ENCODE measurements at regions of chr5 and their contacts with region 1.

Region 1: DNA sequence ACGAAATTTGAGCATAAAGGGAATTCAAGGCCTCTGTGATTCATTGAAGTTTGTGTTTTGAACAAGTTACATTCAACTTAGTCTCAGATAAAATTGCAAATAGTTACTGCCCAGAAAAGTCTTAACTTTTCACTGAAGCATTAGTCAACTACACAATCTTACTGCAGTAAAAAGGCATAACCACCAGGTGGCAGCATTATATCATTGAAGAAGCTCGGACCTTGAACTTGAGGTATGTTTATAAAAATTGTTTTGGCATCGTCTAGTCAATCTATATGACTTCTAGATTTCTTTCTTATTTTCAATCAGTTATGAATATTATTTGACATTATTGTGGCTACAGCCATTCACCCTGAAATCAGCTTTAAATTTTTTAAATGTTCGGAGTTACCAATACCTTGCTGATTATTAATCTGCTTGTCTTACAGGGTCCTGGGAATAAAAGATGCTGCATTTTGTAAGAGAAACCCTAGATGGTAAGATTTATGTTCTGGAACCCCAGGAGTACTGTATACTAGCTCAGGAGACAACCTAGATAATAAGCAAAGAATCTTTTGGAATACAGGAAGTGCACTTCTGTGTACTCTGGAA is 83.9 kb upstream of the GRAMD2B start:
- DNase-seq: peak; percentile 38 to 73 (median 56)
- ATAC-seq: peak; percentile 77
- H3K4me3 ChIP-seq: no peak overlapping the region
- H3K27ac ChIP-seq: no peak overlapping the region
- H3K4me1 ChIP-seq: no peaks in the 10 kb centered on the region
- H3K27me3 ChIP-seq: peaks cover 0 to 4% of the 10 kb centered on the region in 2 experiments; a peak in 1 of 5 replicates
- CTCF ChIP-seq: peak; percentile 59 to 84 (median 67); a peak in 5 of 6 replicates
- EP300 ChIP-seq: no peak
- POLR2A ChIP-seq: no peak
- RAD21 ChIP-seq: peak; percentile 91 to 95

Region 2: DNA sequence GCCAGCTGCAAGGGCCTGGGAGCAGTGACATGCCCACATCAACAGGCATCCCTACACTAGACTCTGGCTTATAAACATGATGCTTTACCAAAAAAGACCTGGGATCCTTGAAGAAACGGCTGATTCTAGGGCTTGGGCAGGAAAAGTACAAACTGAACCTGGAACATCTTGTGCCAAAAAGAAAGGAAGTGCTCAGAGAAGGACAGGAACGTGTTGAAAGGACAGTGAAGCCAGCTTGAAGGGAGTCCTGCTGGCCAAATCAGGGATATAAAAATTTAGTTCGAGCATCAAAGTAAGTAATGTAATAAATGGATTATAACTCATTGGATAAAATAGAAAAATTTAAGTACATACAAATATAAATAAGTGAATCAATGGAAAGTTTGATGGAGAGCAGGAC is 197.6 kb after region 1 on chr5:
- CTCF ChIA-PET with region 1: interaction called, 41 read pairs
- POLR2A ChIA-PET with region 1: no interaction called
- in situ Hi-C with region 1: no loop called
- intact Hi-C with region 1: loop called (anchors 1 kb)
- DNase-seq: no peak
- ATAC-seq: no peak
- H3K4me3 ChIP-seq: no peak overlapping the region
- H3K27ac ChIP-seq: no peak overlapping the region
- H3K4me1 ChIP-seq: peaks cover 6 to 9% of the 10 kb centered on the region in 2 experiments; a peak in 2 of 5 replicates
- H3K27me3 ChIP-seq: peaks cover 0 to 2% of the 10 kb centered on the region in 2 experiments; a peak in 2 of 5 replicates
- CTCF ChIP-seq: no peak
- EP300 ChIP-seq: no peak
- POLR2A ChIP-seq: no peak
- RAD21 ChIP-seq: no peak

Region 3: GRCh38 chr5:126600631-126601511 is 261.6 kb after region 1 on chr5 and contains the start of gene PHAX:
- CTCF ChIA-PET with region 1: interaction called, 21 read pairs
- POLR2A ChIA-PET with region 1: no interaction called
- in situ Hi-C with region 1: no loop called
- intact Hi-C with region 1: no loop called
- DNase-seq: peak; percentile 84 to 89 (median 86)
- ATAC-seq: peak; percentile 99
- H3K4me3 ChIP-seq: peak within 1 kb of the TSS; percentile 100
- H3K27ac ChIP-seq: peak within 1 kb of the TSS; percentile 87
- H3K4me1 ChIP-seq: peaks cover 5 to 27% of the 10 kb centered on the region in 2 experiments; a peak in 3 of 5 replicates
- H3K27me3 ChIP-seq: peaks cover 0 to 6% of the 10 kb centered on the region in 2 experiments; a peak in 1 of 5 replicates
- CTCF ChIP-seq: peak; percentile 87 to 92 (median 90)
- EP300 ChIP-seq: 0 out of 2 replicates have a peak, but pooled peaks have one; percentile 23
- POLR2A ChIP-seq: peak; percentile 90
- RAD21 ChIP-seq: peak; percentile 37 to 46; a peak in 3 of 4 replicates
- polyA plus RNA-seq, gene PHAX: 56.1 to 59.8 TPM

Region 4: DNA sequence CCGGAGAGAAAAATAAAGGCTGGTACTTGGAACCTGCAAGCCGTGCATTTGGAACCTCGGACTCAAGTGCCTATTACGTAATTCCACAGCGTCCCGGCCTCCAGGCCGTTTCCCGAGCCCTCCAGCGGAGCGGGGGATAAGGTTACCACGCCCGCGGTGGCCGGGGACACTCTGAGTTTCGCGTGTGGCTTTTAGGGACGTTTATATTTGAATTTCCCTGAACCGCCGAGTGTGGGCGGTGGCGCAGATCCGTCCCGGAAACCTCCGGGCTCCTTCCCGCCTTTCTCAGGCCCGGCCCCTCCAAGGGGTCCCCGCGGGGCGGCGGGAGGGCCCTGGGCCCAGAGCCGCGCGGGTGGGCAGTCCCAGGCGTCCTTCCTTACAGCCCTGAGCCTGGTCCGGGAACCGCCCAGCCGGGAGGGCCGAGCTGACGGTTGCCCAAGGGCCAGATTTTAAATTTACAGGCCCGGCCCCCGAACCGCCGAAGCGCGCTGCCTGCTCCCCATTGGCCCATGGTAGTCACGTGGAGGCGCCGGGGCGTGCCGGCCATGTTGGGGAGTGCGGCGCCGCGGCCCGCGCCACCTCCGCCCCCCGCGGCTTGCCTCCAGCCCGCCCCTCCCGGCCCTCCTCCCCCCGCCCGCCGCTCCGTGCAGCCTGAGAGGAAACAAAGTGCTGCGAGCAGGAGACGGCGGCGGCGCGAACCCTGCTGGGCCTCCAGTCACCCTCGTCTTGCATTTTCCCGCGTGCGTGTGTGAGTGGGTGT is 437.4 kb after region 1 on chr5 and contains the start of gene LMNB1:
- CTCF ChIA-PET with region 1: interaction called, 3 read pairs
- POLR2A ChIA-PET with region 1: no interaction called
- in situ Hi-C with region 1: loop called (anchors 25 kb)
- intact Hi-C with region 1: loop called (anchors 5 kb)
- DNase-seq: peak; percentile 94 to 97 (median 94)
- ATAC-seq: peak; percentile 83
- H3K4me3 ChIP-seq: peak within 1 kb of the TSS; percentile 93
- H3K27ac ChIP-seq: peak within 1 kb of the TSS; percentile 98
- H3K4me1 ChIP-seq: peaks cover 3 to 19% of the 10 kb centered on the region in 2 experiments; a peak in 4 of 5 replicates
- H3K27me3 ChIP-seq: no peaks in the 10 kb centered on the region
- CTCF ChIP-seq: no peak
- EP300 ChIP-seq: peak; percentile 57
- POLR2A ChIP-seq: peak; percentile 73
- RAD21 ChIP-seq: peak in 1 of 2 experiments; percentile 18; a peak in 3 of 4 replicates
- polyA plus RNA-seq, gene LMNB1: 2.8 to 7.6 TPM

Region 5: DNA sequence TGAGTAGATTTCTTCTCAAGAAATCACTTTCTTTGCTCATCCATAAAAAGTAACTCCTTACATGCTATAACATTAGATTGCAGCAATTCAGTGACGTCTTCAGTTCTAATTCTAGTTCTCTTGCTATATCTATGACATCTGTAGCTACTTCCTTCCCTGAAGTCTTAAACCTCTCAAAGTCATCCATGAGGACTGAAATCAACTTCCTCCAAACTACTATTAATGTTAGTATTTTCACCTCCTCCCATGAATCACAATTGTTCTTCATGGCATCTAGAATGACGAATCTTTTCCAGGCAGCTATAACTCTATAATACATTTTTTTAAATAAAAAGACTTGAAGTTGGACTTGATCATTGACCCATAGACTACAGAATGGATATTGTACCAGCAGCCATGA is 1131.9 kb after region 1 on chr5:
- CTCF ChIA-PET with region 1: no interaction called
- POLR2A ChIA-PET with region 1: no interaction called
- in situ Hi-C with region 1: loop called (anchors 25 kb)
- intact Hi-C with region 1: no loop called
- DNase-seq: no peak
- ATAC-seq: no peak
- H3K4me3 ChIP-seq: no peak overlapping the region
- H3K27ac ChIP-seq: no peak overlapping the region
- H3K4me1 ChIP-seq: no peaks in the 10 kb centered on the region
- H3K27me3 ChIP-seq: no peaks in the 10 kb centered on the region; a peak in 1 of 5 replicates
- CTCF ChIP-seq: no peak
- EP300 ChIP-seq: no peak
- POLR2A ChIP-seq: no peak
- RAD21 ChIP-seq: no peak